ENCODE measurements at regions of chr21 and their contacts with region 1.

Region 1: DNA sequence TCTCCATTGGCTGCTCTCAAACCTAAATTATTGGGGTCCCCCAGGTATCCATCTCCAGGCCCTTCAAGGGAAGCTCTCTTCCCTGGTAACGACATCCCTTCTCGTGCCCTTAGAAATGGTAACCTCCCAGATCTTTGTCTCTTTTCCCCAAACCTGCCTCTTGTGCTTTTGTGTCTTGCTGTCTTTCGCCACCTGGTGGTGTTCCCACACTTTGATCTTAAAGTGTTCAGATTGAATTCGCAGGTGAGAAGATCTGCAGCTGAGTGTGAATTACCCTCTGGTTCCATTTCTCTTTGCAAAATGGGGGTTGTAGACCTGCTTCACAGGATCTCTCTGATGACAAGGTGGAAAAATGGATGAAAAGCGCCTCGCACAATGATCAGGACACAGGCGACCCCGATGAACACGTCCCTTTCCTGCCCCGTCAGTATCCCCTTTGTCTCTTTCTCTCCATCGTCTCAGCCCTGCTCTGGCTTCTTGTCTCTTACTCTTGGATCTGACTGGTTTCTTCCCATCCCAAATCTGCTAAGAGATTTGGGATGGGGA is 53.1 kb downstream of the DOP1B start:
- DNase-seq: peak in 1 of 2 experiments; percentile 70
- H3K4me3 ChIP-seq: no peak overlapping the region
- H3K27ac ChIP-seq: no peak overlapping the region
- H3K4me1 ChIP-seq: peaks cover 0 to 2% (median 0%) of the 10 kb centered on the region in 4 experiments; a peak in 1 of 7 replicates
- H3K27me3 ChIP-seq: no peaks in the 10 kb centered on the region
- CTCF ChIP-seq: peak in 2 of 3 experiments; percentile 72 to 78; a peak in 3 of 4 replicates
- EP300 ChIP-seq: no peak
- POLR2A ChIP-seq: no peak
- RAD21 ChIP-seq: peak; percentile 85 to 88

Region 2: DNA sequence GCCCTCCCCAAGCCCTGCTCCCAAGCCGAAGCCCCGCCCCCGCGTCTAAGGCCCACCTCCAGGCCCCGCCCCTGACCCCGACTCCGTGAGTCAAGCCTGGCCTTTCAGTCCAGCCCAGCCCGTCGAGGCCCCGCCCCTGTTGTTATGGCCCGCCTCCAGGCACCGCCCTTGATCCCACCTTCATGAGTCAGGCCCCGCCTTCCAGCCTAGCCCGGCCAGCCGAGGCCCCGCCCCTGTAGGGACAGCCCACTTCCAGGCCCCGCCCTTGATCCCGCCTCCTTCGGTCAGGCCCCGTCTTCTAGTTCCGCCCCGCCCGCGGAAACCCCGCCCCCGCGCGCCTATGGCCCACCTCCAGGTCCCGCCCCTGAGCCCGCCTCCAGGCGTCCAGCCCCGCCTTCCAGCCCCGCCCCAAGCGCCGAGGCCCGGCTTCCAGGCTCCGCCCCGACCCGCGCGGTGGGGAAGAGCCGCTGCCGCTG is 53.3 kb before region 1 on chr21:
- CTCF ChIA-PET with region 1: interaction called, 107 read pairs
- POLR2A ChIA-PET with region 1: interaction called, 5 read pairs
- DNase-seq: peak; percentile 99 to 100
- H3K4me3 ChIP-seq: peak overlapping the region; percentile 72 to 91 (median 75)
- H3K27ac ChIP-seq: no peak overlapping the region
- H3K4me1 ChIP-seq: peaks cover 0 to 5% (median 2%) of the 10 kb centered on the region in 4 experiments; a peak in 5 of 7 replicates
- H3K27me3 ChIP-seq: peaks cover 5 to 21% (median 12%) of the 10 kb centered on the region in 4 experiments; a peak in 6 of 7 replicates
- CTCF ChIP-seq: no peak
- EP300 ChIP-seq: no peak
- POLR2A ChIP-seq: no peak; a peak in 1 of 3 replicates
- RAD21 ChIP-seq: no peak

Region 3: DNA sequence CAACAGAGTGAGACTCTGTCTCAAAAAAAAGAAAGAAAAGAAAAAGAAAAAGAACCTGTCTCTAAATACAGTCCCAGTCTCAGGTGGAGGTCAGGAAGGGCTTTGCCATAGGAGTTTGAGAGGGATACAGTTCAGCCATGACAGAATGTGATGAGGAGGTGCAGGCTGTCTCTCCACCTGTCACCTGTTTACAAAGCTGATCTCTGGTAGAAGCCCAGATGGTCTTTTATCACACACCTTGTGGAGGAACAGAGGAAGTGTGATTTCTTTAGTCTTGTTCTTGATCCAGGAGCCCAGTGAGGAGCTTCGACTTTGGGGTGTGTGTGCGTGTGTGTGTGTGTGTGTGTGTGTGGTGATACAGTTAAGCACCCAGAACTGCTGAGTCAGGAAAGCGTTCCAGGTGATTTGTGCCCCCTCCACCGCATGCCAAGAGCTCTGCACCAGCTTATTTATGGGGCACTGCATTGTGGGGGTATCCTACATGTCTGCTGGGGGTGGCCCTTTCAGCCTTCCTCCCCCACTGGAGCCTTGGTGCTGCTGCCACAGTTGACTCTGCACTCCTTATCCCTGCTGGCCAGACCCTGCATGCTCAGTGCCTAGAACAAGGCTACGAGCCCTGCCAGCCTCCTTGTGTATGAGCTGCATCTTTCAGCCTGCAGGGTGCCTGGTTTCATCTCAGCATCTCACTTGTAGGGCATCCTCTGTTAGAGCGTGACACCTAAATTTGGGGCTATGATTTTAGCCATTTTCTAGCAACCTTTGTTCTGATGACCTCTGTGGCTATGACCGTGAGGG is 33.7 kb before region 1 on chr21:
- CTCF ChIA-PET with region 1: interaction called, 22 read pairs
- POLR2A ChIA-PET with region 1: interaction called, 5 read pairs
- DNase-seq: no peak
- H3K4me3 ChIP-seq: no peak overlapping the region
- H3K27ac ChIP-seq: no peak overlapping the region
- H3K4me1 ChIP-seq: no peaks in the 10 kb centered on the region
- H3K27me3 ChIP-seq: no peaks in the 10 kb centered on the region
- CTCF ChIP-seq: no peak
- EP300 ChIP-seq: no peak
- POLR2A ChIP-seq: no peak
- RAD21 ChIP-seq: no peak

Region 4: DNA sequence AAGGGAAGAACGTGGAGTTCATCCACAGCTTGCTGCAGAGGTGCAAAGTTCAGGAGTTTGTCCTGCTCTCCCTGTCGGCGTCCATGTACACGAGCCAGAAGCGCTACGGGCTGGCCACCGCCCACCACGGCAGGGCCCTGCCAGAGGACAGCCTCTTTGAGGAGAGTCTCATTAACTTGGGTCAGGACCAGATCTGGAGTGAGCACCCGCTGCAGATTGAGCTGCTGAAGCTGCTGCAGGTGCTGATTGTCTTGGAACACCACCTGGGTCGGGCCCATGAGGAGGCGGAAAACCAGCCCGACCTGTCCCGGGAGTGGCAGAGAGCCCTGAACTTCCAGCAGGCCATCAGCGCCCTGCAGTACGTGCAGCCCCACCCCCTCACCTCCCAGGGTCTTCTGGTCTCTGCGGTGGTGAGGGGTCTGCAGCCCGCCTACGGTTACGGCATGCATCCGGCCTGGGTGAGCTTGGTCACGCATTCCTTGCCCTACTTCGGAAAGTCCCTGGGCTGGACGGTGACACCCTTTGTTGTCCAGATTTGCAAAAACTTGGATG is 36.5 kb after region 1 on chr21:
- CTCF ChIA-PET with region 1: interaction called, 11 read pairs
- POLR2A ChIA-PET with region 1: no interaction called
- DNase-seq: no peak
- H3K4me3 ChIP-seq: no peak overlapping the region
- H3K27ac ChIP-seq: no peak overlapping the region
- H3K4me1 ChIP-seq: peaks cover 3 to 10% (median 6%) of the 10 kb centered on the region in 4 experiments
- H3K27me3 ChIP-seq: no peaks in the 10 kb centered on the region
- CTCF ChIP-seq: no peak
- EP300 ChIP-seq: no peak
- POLR2A ChIP-seq: no peak
- RAD21 ChIP-seq: no peak